Activated CD4-positive, alpha-beta memory T cell treated with anti-CD3 and anti-CD28 coated beads, Interleukin-2, amount 10 ng/mL, durations not matched to agents 7 days and 5 days (primary cell): ENCODE measurements at regions of chr10 and their contacts with region 1.

Region 1: GRCh38 chr10:89701238-89702120 is at the start of gene KIF20B:
- DNase-seq: peak; percentile 97
- H3K4me3 Mint-ChIP-seq: peak within 1 kb of the TSS; percentile 99
- H3K27ac Mint-ChIP-seq: peak within 1 kb of the TSS; percentile 98
- H3K4me1 Mint-ChIP-seq: peaks cover 45% of the 10 kb centered on the region
- H3K27me3 Mint-ChIP-seq: no peaks in the 10 kb centered on the region
- total RNA-seq, gene KIF20B: 82.1 to 83.5 TPM

Region 2: GRCh38 chr10:89550509-89550908 is 151.0 kb before region 1 on chr10:
- CTCF ChIA-PET with region 1: no interaction called
- POLR2A ChIA-PET with region 1: no interaction called
- DNase-seq: no peak
- H3K4me3 Mint-ChIP-seq: no peak overlapping the region
- H3K27ac Mint-ChIP-seq: no peak overlapping the region
- H3K4me1 Mint-ChIP-seq: no peaks in the 10 kb centered on the region
- H3K27me3 Mint-ChIP-seq: peaks cover 8% of the 10 kb centered on the region

Region 3: GRCh38 chr10:89643431-89644331 is 57.8 kb before region 1 on chr10:
- CTCF ChIA-PET with region 1: interaction called, 7 read pairs
- POLR2A ChIA-PET with region 1: interaction called, 43 read pairs
- DNase-seq: peak; percentile 81
- H3K4me3 Mint-ChIP-seq: no peak overlapping the region
- H3K27ac Mint-ChIP-seq: no peak overlapping the region
- H3K4me1 Mint-ChIP-seq: peaks cover 10% of the 10 kb centered on the region
- H3K27me3 Mint-ChIP-seq: peaks cover 7% of the 10 kb centered on the region

Region 4: GRCh38 chr10:89738551-89739209 is 37.2 kb after region 1 on chr10:
- CTCF ChIA-PET with region 1: interaction called, 8 read pairs
- POLR2A ChIA-PET with region 1: interaction called, 35 read pairs
- DNase-seq: no peak
- H3K4me3 Mint-ChIP-seq: peak overlapping the region; percentile 38
- H3K27ac Mint-ChIP-seq: peak overlapping the region; percentile 84
- H3K4me1 Mint-ChIP-seq: peaks cover 40% of the 10 kb centered on the region
- H3K27me3 Mint-ChIP-seq: no peaks in the 10 kb centered on the region

Region 5: GRCh38 chr10:90227217-90227656 is 525.8 kb after region 1 on chr10:
- CTCF ChIA-PET with region 1: no interaction called
- POLR2A ChIA-PET with region 1: no interaction called
- DNase-seq: no peak
- H3K4me3 Mint-ChIP-seq: no peak overlapping the region
- H3K27ac Mint-ChIP-seq: no peak overlapping the region
- H3K4me1 Mint-ChIP-seq: peaks cover 5% of the 10 kb centered on the region
- H3K27me3 Mint-ChIP-seq: no peaks in the 10 kb centered on the region